ENCODE measurements at regions of chr1 and their contacts with region 1.

Region 1: GRCh38 chr1:74197657-74198552 is at the starts of genes FPGT and LRRIQ3:
- DNase-seq: peak; percentile 90 to 97 (median 96)
- ATAC-seq: peak; percentile 99
- H3K4me3 ChIP-seq: peak within 1 kb of the TSS; percentile 85
- H3K4me3 Mint-ChIP-seq: peak within 1 kb of the TSS; percentile 91 to 99 (median 94)
- H3K27ac ChIP-seq: peak within 1 kb of the TSS; percentile 84
- H3K27ac Mint-ChIP-seq: peak within 1 kb of the TSS; percentile 91 to 98 (median 96)
- H3K4me1 ChIP-seq: peaks cover 5% of the 10 kb centered on the region in 2 donors
- H3K4me1 Mint-ChIP-seq: peaks cover 16 to 39% (median 19%) of the 10 kb centered on the region in 7 donors
- H3K27me3 ChIP-seq: no peaks in the 10 kb centered on the region
- H3K27me3 Mint-ChIP-seq: peaks cover 0 to 7% (median 0%) of the 10 kb centered on the region in 5 donors
- total RNA-seq, gene FPGT: 5.6 to 17.7 (median 12.5) TPM
- total RNA-seq, gene LRRIQ3: 0.32 to 1.7 (median 0.47) TPM

Region 2: DNA sequence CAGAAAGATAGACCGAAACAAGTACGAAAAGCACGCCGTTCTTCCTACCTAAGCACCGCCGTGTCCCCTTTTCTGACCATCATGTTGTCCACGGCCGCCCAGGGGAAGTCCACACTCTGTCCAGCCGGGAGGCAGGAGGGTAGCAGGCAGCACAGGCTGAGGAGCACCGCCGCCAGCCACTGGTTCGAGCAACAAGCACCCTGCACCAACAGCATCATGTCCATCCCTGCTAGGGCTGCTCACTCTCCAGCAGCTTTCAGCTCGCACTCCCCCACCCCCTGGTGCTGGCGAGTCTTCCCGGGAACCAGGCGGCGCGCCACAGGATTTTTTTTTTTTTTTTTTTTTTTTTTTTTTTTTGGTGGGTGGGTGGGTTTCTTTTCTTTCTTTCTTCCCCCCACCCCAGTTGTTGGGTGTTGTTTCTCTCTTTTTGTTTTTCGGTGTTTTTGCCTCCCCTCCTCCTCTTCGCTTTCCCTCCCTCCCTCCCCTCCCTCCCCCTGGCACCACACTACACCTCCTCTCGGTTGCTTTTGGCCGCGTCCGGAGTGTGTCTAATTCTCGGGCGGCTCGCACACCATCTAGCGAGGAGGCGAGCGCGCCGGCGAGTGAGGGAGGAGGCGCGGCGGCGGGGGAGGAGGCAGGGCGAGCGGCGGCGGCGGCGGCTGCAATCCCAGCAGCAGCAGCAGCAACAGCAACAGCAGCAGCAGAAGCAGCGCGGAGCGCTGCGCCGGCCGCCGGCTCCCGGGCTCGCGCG is 1915.5 kb before region 1 on chr1 and contains the start of gene NEGR1:
- CTCF ChIA-PET with region 1: no interaction called
- POLR2A ChIA-PET with region 1: no interaction called
- intact Hi-C with region 1: loop called in 1 of 2 experiments (anchors 2 kb)
- DNase-seq: peak; percentile 31 to 68 (median 55)
- ATAC-seq: peak; percentile 80
- H3K4me3 ChIP-seq: peak within 1 kb of the TSS; percentile 71
- H3K4me3 Mint-ChIP-seq: peak within 1 kb of the TSS in 4 of 10 donors; percentile 65 to 86 (median 82)
- H3K27ac ChIP-seq: peak within 1 kb of the TSS; percentile 53
- H3K27ac Mint-ChIP-seq: peak within 1 kb of the TSS in 7 of 9 donors; percentile 43 to 85 (median 68)
- H3K4me1 ChIP-seq: peaks cover 0 to 3% of the 10 kb centered on the region in 2 donors
- H3K4me1 Mint-ChIP-seq: peaks cover 12 to 35% (median 18%) of the 10 kb centered on the region in 7 donors
- H3K27me3 ChIP-seq: no peaks in the 10 kb centered on the region
- H3K27me3 Mint-ChIP-seq: peaks cover 0 to 35% (median 11%) of the 10 kb centered on the region in 5 donors
- total RNA-seq, gene NEGR1: 0.08 to 1.2 TPM in 2 of 5 experiments, not detected in the others

Region 3: GRCh38 chr1:74733604-74734484 is 535.9 kb after region 1 on chr1:
- CTCF ChIA-PET with region 1: interaction called, 4 read pairs
- POLR2A ChIA-PET with region 1: no interaction called
- intact Hi-C with region 1: loop called (anchors 1 kb)
- DNase-seq: peak in 7 of 9 donors; percentile 55 to 75 (median 67)
- ATAC-seq: peak; percentile 85
- H3K4me3 ChIP-seq: peak overlapping the region; percentile 93
- H3K4me3 Mint-ChIP-seq: peak overlapping the region; percentile 84 to 100 (median 98)
- H3K27ac ChIP-seq: peak overlapping the region; percentile 76
- H3K27ac Mint-ChIP-seq: peak overlapping the region; percentile 92 to 99 (median 95)
- H3K4me1 ChIP-seq: peaks cover 21 to 24% of the 10 kb centered on the region in 2 donors
- H3K4me1 Mint-ChIP-seq: peaks cover 22 to 64% (median 43%) of the 10 kb centered on the region in 7 donors
- H3K27me3 ChIP-seq: no peaks in the 10 kb centered on the region
- H3K27me3 Mint-ChIP-seq: no peaks in the 10 kb centered on the region

Region 4: DNA sequence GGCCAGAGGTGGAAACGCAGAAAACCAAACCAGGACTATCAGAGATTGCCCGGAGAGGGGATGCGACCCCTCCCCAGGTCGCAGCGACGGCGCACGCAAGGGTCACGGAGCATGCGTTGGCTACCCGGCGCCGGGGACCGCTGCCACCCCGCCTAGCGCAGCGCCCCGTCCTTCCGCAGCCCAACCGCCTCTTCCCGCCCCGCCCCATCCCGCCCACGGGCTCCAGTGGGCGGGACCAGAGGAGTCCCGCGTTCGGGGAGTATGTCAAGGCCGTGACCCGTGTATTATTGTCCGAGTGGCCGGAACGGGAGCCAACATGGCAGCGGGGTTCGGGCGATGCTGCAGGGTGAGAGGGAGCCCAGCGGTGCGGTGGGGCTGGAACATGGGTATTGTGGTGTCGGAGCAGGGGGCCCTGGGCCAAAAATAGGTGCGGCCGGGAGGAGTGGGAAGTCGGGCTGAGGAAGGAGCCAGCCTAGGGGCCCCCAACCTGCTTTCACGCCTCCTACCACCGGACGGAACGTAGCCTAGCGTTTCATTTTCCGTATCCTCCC is 1526.6 kb after region 1 on chr1 and contains the start of gene ACADM:
- CTCF ChIA-PET with region 1: no interaction called
- POLR2A ChIA-PET with region 1: no interaction called
- intact Hi-C with region 1: loop called (anchors 2 kb)
- DNase-seq: peak; percentile 68 to 93 (median 79)
- ATAC-seq: peak; percentile 98
- H3K4me3 ChIP-seq: peak within 1 kb of the TSS; percentile 92
- H3K4me3 Mint-ChIP-seq: peak within 1 kb of the TSS; percentile 94 to 100 (median 98)
- H3K27ac ChIP-seq: peak within 1 kb of the TSS; percentile 89
- H3K27ac Mint-ChIP-seq: peak within 1 kb of the TSS; percentile 92 to 99 (median 97)
- H3K4me1 ChIP-seq: peaks cover 5 to 12% of the 10 kb centered on the region in 2 donors
- H3K4me1 Mint-ChIP-seq: peaks cover 29 to 75% (median 64%) of the 10 kb centered on the region in 7 donors
- H3K27me3 ChIP-seq: no peaks in the 10 kb centered on the region
- H3K27me3 Mint-ChIP-seq: peaks cover 0 to 2% (median 0%) of the 10 kb centered on the region in 5 donors
- total RNA-seq, gene ACADM: 11.1 to 36.4 (median 32.9) TPM

Measured in naive thymus-derived CD4-positive, alpha-beta T cell (primary cell).